ENCODE measurements at regions of chr6 and their contacts with region 1.

Region 1: GRCh38 chr6:26157977-26158648 is 70.9 kb downstream of the HFE start:
- DNase-seq: peak; percentile 92 to 96
- H3K4me3 ChIP-seq: peak overlapping the region; percentile 63
- CTCF ChIP-seq: no peak
- POLR2A ChIP-seq: peak in 1 of 2 donors; percentile 84

Region 2: DNA sequence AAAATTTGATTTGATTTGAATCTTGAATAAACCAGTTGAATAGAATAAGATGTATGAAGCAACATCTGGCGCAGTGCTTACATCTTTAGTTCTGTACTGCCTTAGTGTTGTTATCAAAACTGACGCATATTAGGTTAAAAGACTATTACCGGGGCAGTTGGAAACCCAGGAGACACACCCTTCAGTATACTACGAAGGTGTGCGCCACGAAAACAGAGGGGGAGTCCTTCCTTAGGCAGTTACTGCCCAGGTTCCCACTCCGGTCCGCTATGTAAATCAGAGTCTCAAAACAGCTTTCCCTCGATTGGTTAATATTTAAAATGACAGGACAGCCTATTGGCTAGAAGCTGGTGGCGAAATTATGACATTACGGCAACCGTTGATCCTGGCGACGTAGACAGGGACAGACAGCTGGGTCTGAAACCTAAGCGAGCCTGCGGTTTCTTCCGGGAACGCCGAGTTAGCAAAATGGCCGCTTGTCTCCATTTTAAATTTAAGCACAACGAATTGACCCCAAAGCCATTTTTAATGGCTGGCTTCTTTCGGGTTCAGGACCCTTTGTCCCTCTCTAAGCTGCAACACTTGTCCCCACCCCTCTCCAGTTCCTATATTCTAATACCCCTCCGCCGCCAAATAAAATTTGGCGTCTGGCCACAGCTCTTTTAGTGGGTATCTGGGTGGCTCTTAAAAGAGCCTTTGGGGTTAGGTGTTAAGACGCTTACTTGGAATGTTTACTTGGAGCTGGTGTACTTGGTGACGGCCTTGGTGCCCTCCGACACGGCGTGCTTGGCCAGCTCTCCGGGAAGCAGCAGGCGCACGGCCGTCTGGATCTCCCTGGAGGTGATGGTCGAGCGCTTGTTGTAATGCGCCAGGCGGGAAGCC is 35.1 kb before region 1 on chr6:
- intact Hi-C with region 1: loop called (anchors 2 kb)
- DNase-seq: peak; percentile 98
- H3K4me3 ChIP-seq: peak overlapping the region; percentile 78
- CTCF ChIP-seq: no peak
- POLR2A ChIP-seq: no peak

Region 3: DNA sequence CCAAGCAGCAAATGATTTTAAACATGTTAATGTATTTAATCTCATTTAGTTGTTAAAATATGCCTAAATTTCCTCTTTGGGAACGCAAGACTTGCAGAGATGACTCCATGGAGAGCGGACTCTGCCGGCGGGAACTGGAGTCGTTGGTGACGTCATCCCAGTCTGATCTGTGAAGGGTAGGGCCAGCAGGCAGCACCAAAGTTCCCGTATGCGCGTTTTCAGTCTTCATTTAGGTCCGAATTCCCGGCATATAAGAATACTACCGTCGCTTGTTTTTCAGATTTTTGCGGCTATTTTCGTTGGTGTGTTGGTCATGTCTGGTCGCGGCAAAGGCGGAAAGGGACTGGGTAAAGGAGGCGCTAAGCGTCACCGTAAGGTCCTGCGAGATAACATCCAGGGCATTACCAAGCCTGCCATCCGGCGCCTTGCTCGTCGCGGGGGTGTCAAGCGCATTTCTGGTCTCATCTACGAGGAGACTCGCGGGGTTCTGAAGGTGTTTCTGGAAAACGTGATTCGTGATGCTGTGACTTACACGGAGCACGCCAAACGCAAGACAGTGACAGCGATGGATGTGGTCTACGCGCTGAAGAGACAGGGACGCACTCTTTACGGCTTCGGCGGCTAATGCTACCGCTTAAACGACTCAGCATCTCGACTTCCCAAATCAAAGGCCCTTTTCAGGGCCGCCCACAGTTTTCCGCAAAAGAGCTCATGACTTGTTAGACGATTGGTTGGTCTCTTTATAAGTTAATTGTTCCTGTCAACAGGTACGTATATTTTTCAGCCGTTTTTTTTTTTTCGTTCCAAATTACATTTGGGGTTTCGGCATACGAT is 46.4 kb after region 1 on chr6:
- intact Hi-C with region 1: no loop called
- DNase-seq: peak; percentile 95 to 96
- H3K4me3 ChIP-seq: peak overlapping the region; percentile 50
- CTCF ChIP-seq: no peak
- POLR2A ChIP-seq: peak in 1 of 2 donors; percentile 58

Measured in lower leg skin (tissue), 4 donors.